Prostate gland (tissue), 2 donors: ENCODE measurements at regions of chr7 and their contacts with region 1.

Region 1: DNA sequence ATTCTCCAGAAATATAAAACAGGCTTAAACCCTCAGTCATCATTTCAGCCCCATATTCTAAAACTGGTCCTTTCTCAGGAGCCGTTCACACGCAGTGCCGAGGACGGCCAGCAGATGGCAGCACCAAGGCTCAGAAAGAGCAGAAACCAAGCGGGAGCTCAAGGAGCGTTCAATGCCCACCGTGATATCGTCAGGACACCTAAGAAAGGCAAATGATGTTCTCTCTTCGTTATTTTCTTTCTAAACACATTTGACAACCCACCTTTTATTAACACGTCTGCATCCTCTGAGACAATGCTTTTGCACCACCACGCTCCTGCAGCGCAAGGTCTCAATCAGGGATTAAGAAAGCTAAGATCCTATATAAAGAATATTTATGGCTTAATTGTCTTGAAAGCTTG is 45.7 kb upstream of the RBM33 start:
- DNase-seq: peak; percentile 72
- H3K4me3 ChIP-seq: no peak overlapping the region
- H3K27ac ChIP-seq: no peak overlapping the region
- H3K4me1 ChIP-seq: no peaks in the 10 kb centered on the region
- H3K27me3 ChIP-seq: peaks cover 14% of the 10 kb centered on the region
- CTCF ChIP-seq: peak; percentile 85 to 98 (median 92)
- POLR2A ChIP-seq: no peak

Region 2: GRCh38 chr7:155490697-155491628 is 107.8 kb before region 1 on chr7:
- intact Hi-C with region 1: no loop called
- DNase-seq: no peak
- H3K4me3 ChIP-seq: peak overlapping the region; percentile 15 to 16
- H3K27ac ChIP-seq: no peak overlapping the region
- H3K4me1 ChIP-seq: no peaks in the 10 kb centered on the region
- H3K27me3 ChIP-seq: peaks cover 9% of the 10 kb centered on the region
- CTCF ChIP-seq: no peak
- POLR2A ChIP-seq: no peak

Region 3: DNA sequence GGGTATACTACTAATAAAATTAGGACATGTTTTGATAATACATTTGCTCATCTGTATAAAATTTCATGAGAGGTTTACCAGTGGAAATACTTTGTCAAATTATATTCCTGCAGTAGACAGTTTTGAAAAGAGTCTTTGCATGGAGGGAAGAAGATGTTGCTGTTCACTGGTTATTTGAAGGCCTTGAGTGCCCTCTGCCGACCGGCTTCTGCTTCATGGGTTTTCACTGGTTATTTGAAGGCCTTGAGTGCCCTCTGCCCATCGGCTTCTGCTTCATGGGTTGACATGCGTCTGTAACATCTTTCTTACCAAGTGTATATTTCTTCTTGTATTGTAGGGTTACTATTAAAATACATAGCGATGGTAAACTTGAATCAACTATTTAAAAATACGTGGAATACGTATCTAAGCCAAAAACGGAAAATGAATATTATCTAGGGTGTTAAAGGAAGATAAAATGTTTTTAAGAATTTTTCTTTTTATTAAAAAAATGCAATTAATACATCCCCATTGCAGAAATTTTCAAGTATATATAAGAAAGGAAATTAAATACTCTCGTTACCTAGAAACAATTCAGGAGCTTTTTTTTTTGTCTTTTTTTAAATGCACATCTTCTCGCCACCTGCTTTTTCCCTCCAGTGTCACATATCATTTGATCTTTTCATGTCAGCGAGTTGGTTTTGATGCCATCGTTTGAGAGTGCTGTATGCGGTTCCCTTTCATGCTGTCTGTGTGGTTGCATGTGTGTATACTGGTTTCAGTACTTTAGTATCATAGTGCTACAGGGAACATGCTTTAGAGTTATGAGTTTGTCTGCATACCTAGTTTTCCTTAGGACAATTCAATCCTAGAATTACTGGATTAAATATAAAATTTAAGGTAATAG is 140.1 kb after region 1 on chr7:
- intact Hi-C with region 1: loop called (anchors 5 kb)
- DNase-seq: peak; percentile 69
- H3K4me3 ChIP-seq: no peak overlapping the region
- H3K27ac ChIP-seq: no peak overlapping the region
- H3K4me1 ChIP-seq: no peaks in the 10 kb centered on the region
- H3K27me3 ChIP-seq: no peaks in the 10 kb centered on the region
- CTCF ChIP-seq: peak in 3 of 4 experiments; percentile 54 to 65 (median 61)
- POLR2A ChIP-seq: no peak

Region 4: GRCh38 chr7:155769701-155770100 is 170.9 kb after region 1 on chr7:
- intact Hi-C with region 1: loop called (anchors 5 kb)
- DNase-seq: no peak
- H3K4me3 ChIP-seq: no peak overlapping the region
- H3K27ac ChIP-seq: no peak overlapping the region
- H3K4me1 ChIP-seq: no peaks in the 10 kb centered on the region
- H3K27me3 ChIP-seq: no peaks in the 10 kb centered on the region
- CTCF ChIP-seq: no peak
- POLR2A ChIP-seq: no peak